ENCODE measurements at regions of chr12 and their contacts with region 1.

Region 1: GRCh38 chr12:53379389-53380103 is 430 bp upstream of the SP1 start:
- DNase-seq: peak; percentile 100
- H3K4me3 Mint-ChIP-seq: no peak overlapping the region
- H3K27ac Mint-ChIP-seq: no peak overlapping the region
- H3K4me1 Mint-ChIP-seq: peaks cover 27% of the 10 kb centered on the region
- H3K27me3 Mint-ChIP-seq: no peaks in the 10 kb centered on the region
- CTCF ChIP-seq: no peak

Region 2: GRCh38 chr12:53352331-53353256 is 27.0 kb before region 1 on chr12:
- CTCF ChIA-PET with region 1: interaction called, 135 read pairs
- POLR2A ChIA-PET with region 1: interaction called, 65 read pairs
- intact Hi-C with region 1: loop called (anchors 1 kb)
- DNase-seq: peak; percentile 91
- H3K4me3 Mint-ChIP-seq: no peak overlapping the region
- H3K27ac Mint-ChIP-seq: peak overlapping the region; percentile 4
- H3K4me1 Mint-ChIP-seq: peaks cover 15% of the 10 kb centered on the region
- H3K27me3 Mint-ChIP-seq: no peaks in the 10 kb centered on the region
- CTCF ChIP-seq: peak; percentile 76

Region 3: DNA sequence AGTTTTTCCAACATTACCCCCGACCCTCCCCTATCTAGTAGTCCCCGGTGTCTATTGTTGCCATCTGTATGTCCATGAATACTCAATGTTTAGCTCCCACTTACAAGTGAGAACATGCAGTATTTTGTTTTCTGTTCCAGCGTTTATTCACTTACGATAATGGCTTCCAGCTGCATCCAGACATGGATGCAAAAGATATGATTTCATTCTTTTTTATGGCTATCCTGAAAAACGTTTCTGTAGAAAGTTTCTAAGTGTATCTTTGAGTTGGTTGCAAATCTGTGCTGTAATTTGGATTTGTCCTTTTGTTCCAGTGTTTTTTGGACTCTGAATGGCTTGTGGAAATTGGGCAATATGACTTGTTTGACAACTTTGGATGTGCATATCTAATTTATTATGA is 12.2 kb after region 1 on chr12:
- CTCF ChIA-PET with region 1: interaction called, 22 read pairs
- POLR2A ChIA-PET with region 1: interaction called, 8 read pairs
- intact Hi-C with region 1: no loop called
- DNase-seq: no peak
- H3K4me3 Mint-ChIP-seq: no peak overlapping the region
- H3K27ac Mint-ChIP-seq: no peak overlapping the region
- H3K4me1 Mint-ChIP-seq: peaks cover 23% of the 10 kb centered on the region
- H3K27me3 Mint-ChIP-seq: no peaks in the 10 kb centered on the region
- CTCF ChIP-seq: no peak

Region 4: DNA sequence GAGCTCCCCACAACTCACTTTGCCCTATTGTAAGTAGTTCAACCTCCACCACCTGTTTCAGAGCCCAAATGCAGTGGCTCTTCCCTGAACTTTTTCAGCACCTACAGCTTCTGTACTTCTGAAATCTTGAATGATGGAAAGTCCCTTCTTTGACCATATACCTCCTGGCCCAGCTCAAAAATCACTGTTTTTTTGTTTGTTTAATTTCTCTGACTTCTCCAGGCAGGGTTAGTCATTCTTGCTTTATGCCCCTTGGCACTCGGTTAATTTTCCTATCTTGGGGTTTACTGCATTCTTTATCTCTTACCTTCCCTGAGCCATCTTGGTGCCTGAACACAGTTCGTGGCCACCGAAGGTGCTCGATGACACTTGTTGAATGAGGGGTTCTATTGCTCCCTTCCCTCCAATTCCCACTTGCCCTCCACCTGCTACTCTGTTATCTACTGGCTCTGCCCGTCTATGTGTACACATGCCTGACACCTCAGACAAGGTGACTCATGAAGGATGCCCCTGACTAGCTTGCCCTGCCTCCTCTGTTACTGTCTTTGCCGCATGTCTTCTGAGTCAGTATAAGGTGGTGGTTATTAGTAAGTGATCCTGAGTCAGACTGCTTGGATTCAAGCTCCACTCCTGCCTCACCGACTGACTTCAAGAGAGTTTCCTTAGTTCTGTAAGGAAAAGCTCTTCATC is 48.5 kb after region 1 on chr12:
- CTCF ChIA-PET with region 1: interaction called, 4 read pairs
- POLR2A ChIA-PET with region 1: interaction called, 17 read pairs
- intact Hi-C with region 1: no loop called
- DNase-seq: peak; percentile 95
- H3K4me3 Mint-ChIP-seq: no peak overlapping the region
- H3K27ac Mint-ChIP-seq: peak overlapping the region; percentile 0
- H3K4me1 Mint-ChIP-seq: peaks cover 21% of the 10 kb centered on the region
- H3K27me3 Mint-ChIP-seq: no peaks in the 10 kb centered on the region
- CTCF ChIP-seq: no peak

Region 5: GRCh38 chr12:53500776-53501614 is 121.4 kb after region 1 on chr12 and contains the start of gene TARBP2:
- CTCF ChIA-PET with region 1: no interaction called
- POLR2A ChIA-PET with region 1: interaction called, 23 read pairs
- intact Hi-C with region 1: no loop called
- DNase-seq: peak; percentile 99
- H3K4me3 Mint-ChIP-seq: peak within 1 kb of the TSS; percentile 80
- H3K27ac Mint-ChIP-seq: peak within 1 kb of the TSS; percentile 93
- H3K4me1 Mint-ChIP-seq: peaks cover 36% of the 10 kb centered on the region
- H3K27me3 Mint-ChIP-seq: no peaks in the 10 kb centered on the region
- CTCF ChIP-seq: no peak
- total RNA-seq, gene TARBP2: 26.4 and 27.8 TPM in 2 replicates